Transverse colon (tissue), 4 donors: ENCODE measurements at regions of chr18 and their contacts with region 1.

Region 1: DNA sequence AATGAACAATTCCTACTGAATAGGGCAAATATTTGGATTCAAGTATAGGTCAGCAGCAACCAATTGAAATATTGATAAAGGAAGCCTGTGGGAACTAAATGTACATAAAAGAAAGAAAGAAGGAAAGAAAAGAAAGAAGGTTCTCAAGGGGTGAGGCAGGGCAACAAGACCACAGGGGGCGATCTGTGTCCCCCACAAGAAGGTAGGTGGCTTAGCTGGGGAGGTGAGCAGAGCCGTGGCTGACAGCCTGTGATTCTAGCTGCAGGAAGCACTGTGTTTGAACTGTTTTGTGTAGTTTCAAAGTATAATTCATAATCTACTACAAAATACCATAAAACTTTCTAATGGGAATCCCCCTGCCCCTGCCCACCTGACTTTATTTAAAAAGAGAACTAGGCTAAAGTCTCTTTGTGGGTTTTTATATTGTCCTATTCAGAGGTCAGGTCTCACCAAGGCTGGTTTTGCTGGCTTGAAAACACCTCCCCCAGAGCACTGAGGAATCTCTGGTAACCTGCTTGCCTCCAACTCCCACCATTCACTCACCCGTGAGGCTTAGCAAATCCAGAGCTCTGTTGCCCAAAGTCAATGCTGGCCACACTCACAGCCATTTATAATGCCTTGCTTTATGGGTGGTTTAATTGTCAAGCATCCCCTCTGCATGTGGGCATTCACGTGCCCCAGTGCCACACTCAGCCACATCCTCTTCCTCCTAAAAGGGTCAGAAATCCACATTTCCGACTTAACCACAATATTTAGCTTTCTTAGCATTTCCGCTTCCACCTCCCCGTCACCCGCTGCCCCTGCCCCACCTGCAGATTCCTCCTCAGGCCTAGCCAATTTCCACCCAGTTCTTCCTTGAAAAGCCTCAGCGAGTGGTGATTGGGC is 36.4 kb upstream of the LMAN1 start:
- DNase-seq: no peak
- H3K4me3 ChIP-seq: no peak overlapping the region
- H3K27ac ChIP-seq: no peak overlapping the region
- H3K4me1 ChIP-seq: no peaks in the 10 kb centered on the region
- H3K27me3 ChIP-seq: no peaks in the 10 kb centered on the region
- CTCF ChIP-seq: no peak
- EP300 ChIP-seq: no peak
- POLR2A ChIP-seq: no peak

Region 2: GRCh38 chr18:59311631-59312030 is 83.8 kb before region 1 on chr18:
- in situ Hi-C with region 1: loop called in 1 of 4 experiments (anchors 5 kb)
- intact Hi-C with region 1: no loop called
- DNase-seq: no peak
- H3K4me3 ChIP-seq: no peak overlapping the region
- H3K27ac ChIP-seq: no peak overlapping the region
- H3K4me1 ChIP-seq: peaks cover 0 to 11% (median 2%) of the 10 kb centered on the region in 4 donors
- H3K27me3 ChIP-seq: peaks cover 42% of the 10 kb centered on the region
- CTCF ChIP-seq: no peak
- EP300 ChIP-seq: no peak
- POLR2A ChIP-seq: no peak

Region 3: DNA sequence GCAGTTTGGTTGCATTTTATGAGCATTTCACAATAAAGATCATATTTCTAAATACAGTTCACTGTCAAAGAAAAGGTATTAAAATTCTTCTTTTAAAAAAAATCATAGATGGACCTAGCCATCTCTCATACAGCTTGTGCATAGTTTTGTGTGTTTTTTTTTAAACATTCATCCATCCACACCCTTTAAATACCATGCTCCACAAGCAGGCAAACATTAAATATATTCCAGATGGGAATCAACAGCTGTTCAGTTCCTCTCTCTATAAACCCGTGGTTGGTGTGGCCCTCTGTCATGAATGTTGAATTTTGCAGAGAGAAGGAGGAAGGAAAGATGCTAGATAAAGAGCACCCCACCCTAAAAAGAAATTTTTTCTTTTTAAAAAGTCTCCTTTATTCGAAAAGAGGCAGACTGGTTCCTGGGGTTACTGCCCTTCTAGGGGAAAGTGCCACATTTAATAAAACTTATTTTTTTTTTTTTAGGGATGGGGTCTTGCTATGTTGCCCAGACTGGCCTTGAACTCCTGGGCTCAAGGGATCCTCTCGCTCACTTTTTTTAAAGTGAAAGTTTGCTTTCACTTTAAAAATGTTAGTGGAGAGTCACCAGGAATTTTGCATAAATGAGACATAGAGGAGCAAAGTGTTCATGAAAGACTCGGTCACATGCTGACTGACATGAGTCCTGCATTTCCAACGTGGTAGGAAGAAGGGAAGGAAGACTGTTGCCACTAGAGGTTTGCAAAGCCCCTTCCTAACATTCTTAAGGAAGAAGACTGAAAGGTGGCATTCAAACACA is 37.5 kb after region 1 on chr18:
- in situ Hi-C with region 1: no loop called
- intact Hi-C with region 1: loop called (anchors 1 kb)
- DNase-seq: no peak
- H3K4me3 ChIP-seq: no peak overlapping the region
- H3K27ac ChIP-seq: no peak overlapping the region
- H3K4me1 ChIP-seq: no peaks in the 10 kb centered on the region
- H3K27me3 ChIP-seq: no peaks in the 10 kb centered on the region
- CTCF ChIP-seq: no peak
- EP300 ChIP-seq: no peak
- POLR2A ChIP-seq: no peak

Region 4: GRCh38 chr18:59488899-59489298 is 93.4 kb after region 1 on chr18:
- in situ Hi-C with region 1: no loop called
- intact Hi-C with region 1: no loop called
- DNase-seq: no peak
- H3K4me3 ChIP-seq: no peak overlapping the region
- H3K27ac ChIP-seq: no peak overlapping the region
- H3K4me1 ChIP-seq: no peaks in the 10 kb centered on the region
- H3K27me3 ChIP-seq: no peaks in the 10 kb centered on the region
- CTCF ChIP-seq: no peak
- EP300 ChIP-seq: no peak
- POLR2A ChIP-seq: no peak